ENCODE measurements at regions of chr1 and their contacts with region 1.

Region 1: DNA sequence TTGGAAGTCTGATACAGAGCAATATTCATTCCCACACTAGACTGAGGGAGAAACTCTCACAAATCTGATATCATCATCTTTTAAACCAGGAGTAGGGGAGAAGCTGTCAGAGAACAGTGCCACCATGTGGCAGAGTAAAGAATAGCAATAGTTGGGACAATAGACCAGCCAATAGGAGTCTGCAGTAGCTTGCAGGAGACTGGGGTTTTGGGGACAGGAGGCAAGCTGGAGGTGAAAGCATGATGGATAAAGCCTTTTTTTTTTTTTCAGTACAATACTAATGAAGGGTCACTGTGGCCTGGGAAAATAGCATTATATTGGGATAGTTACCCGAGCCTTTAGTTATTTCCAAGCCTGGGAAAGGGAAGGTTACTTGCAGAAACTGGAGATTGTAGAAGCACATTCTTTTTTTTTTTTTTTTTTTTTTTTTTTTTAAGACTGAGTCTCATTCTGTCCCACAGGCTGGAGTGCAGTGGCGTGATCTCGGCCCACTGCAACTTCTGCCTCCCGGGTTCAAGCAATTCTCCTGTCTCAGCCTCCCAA is 120.7 kb downstream of the S1PR1 start:
- DNase-seq: peak; percentile 73
- H3K4me3 Mint-ChIP-seq: no peak overlapping the region
- H3K27ac Mint-ChIP-seq: peak overlapping the region; percentile 36
- H3K4me1 Mint-ChIP-seq: peaks cover 8% of the 10 kb centered on the region
- H3K27me3 Mint-ChIP-seq: no peaks in the 10 kb centered on the region

Region 2: DNA sequence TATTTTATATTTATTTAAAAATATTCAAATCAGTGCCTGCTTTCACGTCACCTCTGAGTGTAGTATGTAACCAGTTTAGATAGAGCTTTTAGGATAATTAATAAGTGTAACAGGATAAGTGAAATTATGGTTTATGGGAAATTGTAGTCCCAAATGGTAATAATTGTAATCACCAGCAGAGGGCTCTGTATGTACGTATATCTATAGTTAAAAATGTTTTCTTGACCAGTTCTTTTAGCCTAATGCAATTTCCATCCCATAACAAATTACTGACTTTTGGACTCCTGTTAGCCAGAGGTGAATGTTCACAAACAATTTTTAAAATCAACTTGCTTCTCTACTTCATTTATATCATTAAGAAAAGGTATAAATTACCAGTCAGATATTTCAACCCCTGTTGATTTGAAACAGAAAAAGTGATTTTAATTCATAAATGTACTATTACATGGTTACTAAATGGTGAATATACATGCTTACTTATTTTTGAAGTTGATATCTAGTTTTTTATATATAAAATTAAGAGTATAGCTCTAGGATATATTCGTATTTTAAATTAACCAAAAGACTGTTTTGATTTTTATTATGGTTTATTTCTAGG is 436.3 kb before region 1 on chr1:
- CTCF ChIA-PET with region 1: interaction called, 6 read pairs
- POLR2A ChIA-PET with region 1: no interaction called
- intact Hi-C with region 1: loop called (anchors 1 kb)
- DNase-seq: no peak
- H3K4me3 Mint-ChIP-seq: no peak overlapping the region
- H3K27ac Mint-ChIP-seq: peak overlapping the region; percentile 52
- H3K4me1 Mint-ChIP-seq: peaks cover 56% of the 10 kb centered on the region
- H3K27me3 Mint-ChIP-seq: no peaks in the 10 kb centered on the region

Region 3: DNA sequence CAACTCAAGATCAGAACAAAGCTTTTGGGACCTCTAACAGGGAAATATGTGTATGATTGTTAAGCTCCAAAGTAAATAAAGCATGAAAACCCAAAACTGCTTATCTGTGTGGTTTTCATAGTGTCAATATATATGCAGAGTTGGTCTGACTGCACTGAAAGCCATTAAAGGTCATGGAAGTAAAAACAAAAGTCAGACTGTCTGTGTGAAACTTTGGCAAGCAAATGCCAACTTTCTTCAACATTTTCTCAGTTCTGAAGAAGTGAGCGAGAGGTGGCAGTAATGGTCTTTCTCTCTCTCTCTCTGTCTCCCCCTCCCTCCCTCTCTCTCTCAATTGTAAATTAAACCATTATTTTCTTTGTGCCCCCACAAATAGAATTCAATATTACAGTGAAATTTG is 220.8 kb before region 1 on chr1:
- CTCF ChIA-PET with region 1: interaction called, 9 read pairs
- POLR2A ChIA-PET with region 1: no interaction called
- intact Hi-C with region 1: loop called (anchors 1 kb)
- DNase-seq: peak; percentile 31
- H3K4me3 Mint-ChIP-seq: peak overlapping the region; percentile 14
- H3K27ac Mint-ChIP-seq: peak overlapping the region; percentile 79
- H3K4me1 Mint-ChIP-seq: peaks cover 60% of the 10 kb centered on the region
- H3K27me3 Mint-ChIP-seq: no peaks in the 10 kb centered on the region

Region 4: GRCh38 chr1:101317590-101317989 is 39.9 kb before region 1 on chr1:
- CTCF ChIA-PET with region 1: interaction called, 203 read pairs
- POLR2A ChIA-PET with region 1: interaction called, 4 read pairs
- intact Hi-C with region 1: no loop called
- DNase-seq: peak; percentile 30
- H3K4me3 Mint-ChIP-seq: no peak overlapping the region
- H3K27ac Mint-ChIP-seq: no peak overlapping the region
- H3K4me1 Mint-ChIP-seq: peaks cover 21% of the 10 kb centered on the region
- H3K27me3 Mint-ChIP-seq: peaks cover 2% of the 10 kb centered on the region

Region 5: DNA sequence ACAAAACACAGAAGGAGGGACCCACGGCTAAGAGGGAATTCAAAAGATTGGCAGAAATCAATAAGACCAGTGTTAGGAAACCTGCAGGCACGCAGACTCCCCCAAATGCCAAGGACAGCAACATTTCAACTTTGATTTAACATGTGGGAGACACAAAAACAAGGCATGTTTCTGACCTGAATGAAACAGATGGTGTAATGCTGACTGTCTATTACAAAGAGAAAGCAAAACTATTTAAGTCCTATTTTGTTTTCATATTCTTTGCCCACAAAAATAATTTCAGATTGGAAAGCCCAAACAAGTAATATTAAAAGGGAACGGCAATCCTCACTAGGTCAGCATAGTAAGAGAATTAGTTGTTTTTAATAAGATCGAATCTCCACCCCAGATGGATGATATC is 12.8 kb before region 1 on chr1:
- CTCF ChIA-PET with region 1: interaction called, 17 read pairs
- POLR2A ChIA-PET with region 1: no interaction called
- intact Hi-C with region 1: no loop called
- DNase-seq: no peak
- H3K4me3 Mint-ChIP-seq: no peak overlapping the region
- H3K27ac Mint-ChIP-seq: no peak overlapping the region
- H3K4me1 Mint-ChIP-seq: peaks cover 35% of the 10 kb centered on the region
- H3K27me3 Mint-ChIP-seq: no peaks in the 10 kb centered on the region

Region 6: GRCh38 chr1:101371259-101371658 is 13.7 kb after region 1 on chr1:
- CTCF ChIA-PET with region 1: interaction called, 22 read pairs
- POLR2A ChIA-PET with region 1: interaction called, 3 read pairs
- intact Hi-C with region 1: no loop called
- DNase-seq: peak; percentile 17
- H3K4me3 Mint-ChIP-seq: no peak overlapping the region
- H3K27ac Mint-ChIP-seq: no peak overlapping the region
- H3K4me1 Mint-ChIP-seq: peaks cover 11% of the 10 kb centered on the region
- H3K27me3 Mint-ChIP-seq: no peaks in the 10 kb centered on the region

Region 7: GRCh38 chr1:101520302-101520701 is 162.8 kb after region 1 on chr1:
- CTCF ChIA-PET with region 1: no interaction called
- POLR2A ChIA-PET with region 1: no interaction called
- intact Hi-C with region 1: no loop called
- DNase-seq: peak; percentile 13
- H3K4me3 Mint-ChIP-seq: no peak overlapping the region
- H3K27ac Mint-ChIP-seq: no peak overlapping the region
- H3K4me1 Mint-ChIP-seq: peaks cover 5% of the 10 kb centered on the region
- H3K27me3 Mint-ChIP-seq: peaks cover 3% of the 10 kb centered on the region

Measured in activated CD4-positive, alpha-beta memory T cell treated with anti-CD3 and anti-CD28 coated beads for 36 hours (primary cell).